GM10248 (cell line): ENCODE measurements at regions of chr11 and their contacts with region 1.

Region 1: GRCh38 chr11:76799066-76799804 is 16.1 kb downstream of the TSKU start:
- DNase-seq: peak; percentile 90
- CTCF ChIP-seq: peak; percentile 89

Region 2: DNA sequence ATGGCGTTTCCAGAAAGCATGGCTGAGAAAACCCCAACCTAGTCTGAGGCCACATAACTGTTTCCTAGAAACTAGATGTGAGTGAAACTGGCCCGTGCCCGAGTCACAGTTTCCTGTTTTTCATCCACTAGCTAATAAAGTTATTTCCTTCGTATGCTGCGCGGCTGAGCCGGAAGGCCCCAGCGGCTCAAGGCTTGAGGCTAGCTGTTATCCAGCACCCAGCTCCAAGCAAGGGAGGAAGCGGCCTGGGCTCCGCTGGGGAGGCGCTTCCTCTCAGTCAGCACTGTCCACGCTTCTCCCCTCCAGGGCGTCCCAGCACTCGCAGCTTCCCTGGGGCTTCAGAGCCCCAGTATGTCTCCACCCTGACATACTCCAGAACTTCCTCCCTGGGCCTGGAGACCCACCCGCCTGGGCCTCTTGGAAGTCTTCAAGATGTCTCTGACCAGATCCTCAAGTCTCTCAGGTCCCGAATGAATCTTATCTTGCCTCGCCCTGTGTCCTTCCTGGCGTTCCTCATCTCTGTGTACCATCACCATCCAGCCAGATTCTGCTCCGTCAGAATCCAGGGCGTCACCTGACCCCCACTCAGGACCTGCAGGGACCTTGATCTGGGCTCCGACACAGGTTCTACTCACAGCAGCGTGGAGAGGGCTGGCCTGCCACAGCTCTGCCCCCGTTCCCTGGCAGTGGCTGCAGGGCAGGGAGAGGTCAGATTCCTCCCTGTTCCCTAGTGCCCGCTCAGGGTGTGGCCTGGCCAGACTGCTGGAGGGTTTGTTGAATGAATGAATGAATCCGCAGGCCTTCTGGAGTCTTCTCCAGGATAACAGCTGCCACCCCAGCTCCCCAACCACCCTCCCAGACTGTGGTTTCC is 210.5 kb before region 1 on chr11:
- CTCF ChIA-PET with region 1: no interaction called
- POLR2A ChIA-PET with region 1: interaction called, 11 read pairs
- DNase-seq: peak; percentile 16
- CTCF ChIP-seq: no peak

Region 3: GRCh38 chr11:76734456-76735420 is 64.5 kb before region 1 on chr11:
- CTCF ChIA-PET with region 1: interaction called, 46 read pairs
- POLR2A ChIA-PET with region 1: no interaction called
- DNase-seq: no peak
- CTCF ChIP-seq: no peak

Region 4: DNA sequence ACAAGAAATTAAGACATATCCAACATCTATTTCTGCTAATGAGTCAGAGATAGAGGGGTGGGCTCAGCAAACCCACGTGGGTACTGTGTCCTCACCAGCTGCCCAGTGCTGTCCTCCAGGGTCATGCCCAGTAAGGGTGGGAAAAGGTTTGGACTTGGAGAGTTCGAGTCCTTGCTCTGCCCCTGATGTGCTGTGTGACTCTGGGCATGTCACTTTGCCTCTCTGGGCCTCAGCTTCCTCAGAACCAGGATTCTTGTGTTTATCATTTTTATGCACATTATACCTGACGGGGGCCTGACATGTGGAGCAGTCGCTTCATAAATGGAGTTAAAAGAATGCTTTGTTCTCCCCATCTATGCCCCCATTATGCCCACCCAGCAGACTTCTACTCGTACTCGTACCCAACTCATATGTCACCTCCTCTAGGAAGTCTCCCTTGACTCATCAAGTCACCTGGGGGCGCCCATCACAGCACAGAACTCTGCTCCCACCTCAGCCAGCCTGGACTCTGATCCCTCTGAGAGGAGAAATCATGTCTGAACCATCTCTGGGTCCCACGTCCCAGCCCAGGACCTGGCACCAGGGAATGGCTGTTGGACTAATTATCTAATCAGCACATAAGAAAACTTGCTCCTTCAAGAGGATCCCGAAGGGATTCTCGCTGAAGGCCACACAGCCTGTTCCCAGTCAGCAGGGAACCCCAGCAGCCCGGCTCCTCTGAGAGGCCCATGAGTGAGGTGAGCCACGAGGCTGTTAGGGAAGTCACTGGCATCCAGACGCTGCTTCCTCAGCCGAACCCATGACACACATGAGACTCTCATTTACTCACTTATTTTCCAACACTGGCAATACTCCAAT is 54.8 kb before region 1 on chr11:
- CTCF ChIA-PET with region 1: interaction called, 12 read pairs
- POLR2A ChIA-PET with region 1: no interaction called
- DNase-seq: no peak
- CTCF ChIP-seq: no peak